Upper lobe of right lung (tissue), 1 donor: ENCODE measurements at regions of chr6 and their contacts with region 1.

Region 1: GRCh38 chr6:30013291-30013922 is 47.7 kb upstream of the POLR1H start:
- DNase-seq: no peak
- ATAC-seq: peak; percentile 84
- H3K4me3 ChIP-seq: no peak overlapping the region
- H3K27ac ChIP-seq: no peak overlapping the region
- H3K4me1 ChIP-seq: no peaks in the 10 kb centered on the region
- H3K27me3 ChIP-seq: no peaks in the 10 kb centered on the region
- CTCF ChIP-seq: peak; percentile 88

Region 2: GRCh38 chr6:29847871-29848630 is 165.4 kb before region 1 on chr6:
- intact Hi-C with region 1: loop called (anchors 5 kb)
- DNase-seq: peak; percentile 90
- ATAC-seq: peak; percentile 97
- H3K4me3 ChIP-seq: no peak overlapping the region
- H3K27ac ChIP-seq: no peak overlapping the region
- H3K4me1 ChIP-seq: no peaks in the 10 kb centered on the region
- H3K27me3 ChIP-seq: peaks cover 36% of the 10 kb centered on the region
- CTCF ChIP-seq: peak; percentile 95

Region 3: DNA sequence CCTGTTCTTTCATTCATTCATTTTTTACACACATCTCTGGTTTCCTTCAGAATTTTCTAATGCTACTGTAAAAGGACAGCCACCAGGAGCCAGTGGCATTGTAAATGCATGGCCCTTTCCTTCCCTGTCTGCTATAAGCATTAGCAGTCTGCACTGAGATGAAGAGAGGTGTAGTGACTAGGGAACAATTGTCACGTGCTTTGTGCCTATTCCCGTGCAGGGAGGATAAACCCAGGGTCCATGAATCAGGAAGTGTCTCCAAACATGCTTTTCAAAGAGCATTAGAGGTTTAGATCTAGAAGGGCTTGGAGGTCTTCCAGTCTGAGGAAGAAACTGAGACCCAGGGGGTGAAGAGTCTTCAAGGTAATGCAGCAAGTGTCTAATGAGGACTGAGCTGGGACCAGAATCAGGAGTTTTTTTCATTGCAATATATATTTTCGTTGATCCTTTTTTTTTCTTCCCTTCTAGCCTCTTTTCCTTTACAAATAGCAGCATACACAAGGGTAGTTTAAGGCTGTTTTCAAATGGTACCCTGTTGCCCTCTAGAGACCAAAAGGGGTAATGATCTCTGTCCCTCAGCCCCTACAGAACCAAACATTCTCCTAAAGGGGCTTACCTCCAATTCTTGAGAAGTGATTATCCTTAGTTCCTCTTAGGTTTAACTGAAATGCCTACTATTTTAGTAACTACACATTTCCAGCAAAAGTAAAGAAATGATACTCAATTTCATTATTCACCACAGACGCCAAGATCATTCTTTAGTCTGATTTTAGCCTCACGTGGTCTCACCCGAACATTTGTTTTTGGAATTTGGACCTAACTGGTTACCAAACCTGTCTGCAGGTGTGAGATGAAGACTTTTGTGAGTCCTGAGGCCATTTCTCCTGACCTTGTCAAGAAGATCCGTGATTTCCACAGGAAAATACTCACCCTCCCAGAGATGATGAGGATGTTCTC is 156.5 kb after region 1 on chr6:
- intact Hi-C with region 1: no loop called
- DNase-seq: no peak
- ATAC-seq: peak; percentile 87
- H3K4me3 ChIP-seq: no peak overlapping the region
- H3K27ac ChIP-seq: no peak overlapping the region
- H3K4me1 ChIP-seq: peaks cover 10% of the 10 kb centered on the region
- H3K27me3 ChIP-seq: peaks cover 55% of the 10 kb centered on the region
- CTCF ChIP-seq: peak; percentile 86